ENCODE measurements at regions of chr4 and their contacts with region 1.

Region 1: DNA sequence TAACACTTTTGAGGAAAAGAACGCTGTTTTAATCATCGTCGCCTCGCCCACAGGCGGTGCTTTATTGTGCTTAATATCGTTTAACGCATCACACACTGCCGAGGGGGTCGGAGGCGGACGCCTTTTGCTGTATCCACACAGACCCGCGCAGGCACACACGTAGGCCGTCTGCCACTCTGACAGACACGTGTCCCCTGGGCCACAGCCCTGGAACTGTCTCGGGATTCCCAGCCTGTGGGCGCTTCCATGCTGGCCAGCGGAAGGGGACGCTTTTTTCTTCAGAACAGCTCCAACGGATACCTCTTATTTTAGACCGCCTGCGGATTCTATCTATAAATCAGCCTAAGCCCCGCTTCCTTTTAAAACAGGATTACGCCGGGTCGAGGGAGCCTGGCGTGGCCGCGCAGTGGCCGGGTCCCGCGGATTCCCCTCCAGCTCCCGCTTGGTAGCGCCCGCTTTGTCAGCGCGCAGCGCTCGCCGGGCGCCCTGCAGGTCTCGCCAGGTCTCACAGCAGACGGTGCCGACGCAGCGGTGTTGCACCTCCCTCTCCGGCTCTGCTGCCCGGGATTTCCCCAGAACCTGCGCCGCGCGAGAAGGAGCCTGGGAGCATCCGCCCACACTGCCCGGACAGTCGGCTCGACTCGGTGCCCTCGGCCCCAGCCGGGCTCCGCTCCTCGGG is at the start of gene NOCT:
- DNase-seq: peak; percentile 95
- H3K4me3 ChIP-seq: peak within 1 kb of the TSS; percentile 88
- H3K27ac ChIP-seq: peak within 1 kb of the TSS; percentile 79
- H3K4me1 ChIP-seq: peaks cover 38% of the 10 kb centered on the region
- CTCF ChIP-seq: no peak
- total RNA-seq, gene NOCT: 12.7 and 22.8 TPM in 2 replicates

Region 2: DNA sequence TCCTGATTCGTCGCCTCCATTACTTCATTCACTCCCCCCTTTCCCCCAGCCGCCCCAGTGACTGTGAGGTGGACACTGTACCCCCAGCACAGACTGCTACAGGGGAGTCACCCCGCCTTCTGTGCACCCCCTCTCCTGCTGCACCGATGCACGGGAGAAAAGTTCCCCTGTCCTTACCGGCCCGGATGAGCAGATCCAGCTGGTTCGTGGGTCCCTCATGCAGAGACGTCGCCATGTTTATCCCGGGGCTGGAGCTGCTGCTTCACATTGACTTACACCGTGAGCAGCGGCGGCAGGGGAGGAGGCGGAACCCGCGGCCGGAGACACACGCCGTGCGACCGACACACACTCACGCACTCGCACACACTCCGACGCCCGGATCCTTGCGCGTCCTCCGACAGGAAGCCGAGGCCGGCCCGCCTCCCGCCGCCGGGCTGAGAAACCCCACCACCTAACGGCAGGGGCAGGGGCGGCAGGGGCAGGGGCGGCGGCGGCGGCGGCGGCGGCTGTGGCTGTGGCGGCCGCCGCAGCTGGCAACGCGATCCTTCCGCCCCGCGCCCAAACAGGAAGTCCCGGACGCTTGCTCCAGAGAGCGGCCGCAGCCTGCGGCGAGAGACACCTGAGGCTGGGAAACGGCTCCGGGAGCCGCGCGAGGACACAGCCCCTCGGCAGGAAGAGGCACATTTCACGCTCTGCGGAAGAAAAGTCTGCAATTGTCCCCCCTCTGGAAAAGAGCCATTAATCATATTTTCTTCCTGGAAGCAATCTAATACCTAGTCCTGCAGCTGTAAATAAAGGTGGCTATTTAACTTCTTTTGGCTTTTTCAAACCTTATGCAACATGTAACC is 68.8 kb after region 1 on chr4:
- CTCF ChIA-PET with region 1: no interaction called
- POLR2A ChIA-PET with region 1: interaction called, 12 read pairs
- intact Hi-C with region 1: loop called (anchors 1 kb)
- DNase-seq: peak; percentile 93
- H3K4me3 ChIP-seq: peak overlapping the region; percentile 91
- H3K27ac ChIP-seq: peak overlapping the region; percentile 95
- H3K4me1 ChIP-seq: peaks cover 22% of the 10 kb centered on the region
- CTCF ChIP-seq: peak; percentile 46

Region 3: DNA sequence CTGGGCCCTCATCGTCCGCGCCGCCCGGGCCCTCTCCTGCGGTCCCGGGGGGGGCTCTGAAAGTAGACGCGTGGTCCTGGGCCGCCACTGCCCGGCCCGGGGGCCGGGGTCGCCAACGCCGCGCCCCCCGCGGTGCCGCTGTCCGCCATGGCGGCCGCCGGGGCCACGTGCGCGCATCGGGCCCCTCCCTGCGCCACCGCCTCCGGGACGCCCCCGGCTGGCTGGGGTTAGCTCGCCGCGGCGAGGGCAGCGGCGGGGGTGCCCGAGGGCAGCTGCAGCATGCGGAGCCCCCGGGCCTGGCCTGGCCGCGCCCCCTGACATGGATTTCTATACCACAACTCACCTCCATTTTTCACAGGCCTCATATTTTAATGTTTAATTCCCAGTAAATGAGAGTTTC is 99.8 kb after region 1 on chr4:
- CTCF ChIA-PET with region 1: no interaction called
- POLR2A ChIA-PET with region 1: no interaction called
- intact Hi-C with region 1: no loop called
- DNase-seq: no peak
- H3K4me3 ChIP-seq: no peak overlapping the region
- H3K27ac ChIP-seq: no peak overlapping the region
- H3K4me1 ChIP-seq: no peaks in the 10 kb centered on the region
- CTCF ChIP-seq: no peak

Region 4: DNA sequence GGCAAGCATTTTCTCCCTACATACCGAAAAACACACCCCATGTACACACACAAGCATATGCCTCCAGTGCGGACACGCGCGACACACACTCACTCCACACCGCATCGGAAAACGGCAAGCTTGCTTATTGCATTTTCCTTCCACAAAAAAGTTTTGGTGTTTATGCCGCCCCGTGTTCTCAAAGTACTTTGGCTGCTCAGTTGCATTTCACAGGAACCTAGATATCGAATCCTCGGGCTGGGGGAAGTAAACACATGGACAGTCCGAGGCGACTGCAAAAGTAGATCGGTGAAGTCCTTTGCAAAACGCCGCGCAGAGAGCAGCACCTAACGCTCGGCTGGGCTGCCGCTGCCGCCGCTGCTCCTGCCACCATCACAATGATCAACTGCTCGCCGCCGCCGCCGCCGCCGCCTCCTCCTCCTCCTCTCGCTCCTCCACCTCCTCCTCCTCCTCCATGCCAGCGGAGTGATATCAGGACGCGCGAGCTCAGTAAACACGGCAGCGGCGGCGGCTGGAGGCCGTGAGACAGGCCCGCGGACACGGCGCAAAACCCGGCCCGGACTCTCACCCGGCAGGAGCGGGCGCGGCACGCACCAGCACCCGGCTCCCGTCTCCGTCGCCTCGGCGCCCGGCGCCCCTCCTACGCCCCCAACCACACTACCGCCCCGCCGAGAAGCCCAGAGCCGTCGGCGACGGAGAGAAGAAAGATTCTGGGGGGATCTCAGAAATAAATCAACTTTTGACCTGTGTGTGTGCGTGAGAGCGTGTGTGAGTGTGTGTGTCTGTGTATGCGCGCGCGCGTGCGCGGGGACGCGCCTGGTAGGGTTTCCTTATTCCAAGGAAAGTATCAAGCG is 1138.5 kb after region 1 on chr4 and contains the start of gene MAML3:
- CTCF ChIA-PET with region 1: no interaction called
- POLR2A ChIA-PET with region 1: no interaction called
- intact Hi-C with region 1: loop called (anchors 5 kb)
- DNase-seq: peak; percentile 91
- H3K4me3 ChIP-seq: peak within 1 kb of the TSS; percentile 72
- H3K27ac ChIP-seq: peak within 1 kb of the TSS; percentile 52
- H3K4me1 ChIP-seq: peaks cover 59% of the 10 kb centered on the region
- CTCF ChIP-seq: no peak
- total RNA-seq, gene MAML3: 1.2 and 1.8 TPM in 2 replicates